ENCODE measurements at regions of chr2 and their contacts with region 1.

Region 1: GRCh38 chr2:30428827-30429461 is 18.1 kb upstream of the LCLAT1 start:
- DNase-seq: peak; percentile 32
- H3K4me3 Mint-ChIP-seq: no peak overlapping the region
- H3K27ac Mint-ChIP-seq: peak overlapping the region; percentile 63
- H3K4me1 Mint-ChIP-seq: peaks cover 27% of the 10 kb centered on the region
- H3K27me3 Mint-ChIP-seq: no peaks in the 10 kb centered on the region

Region 2: GRCh38 chr2:30410217-30410616 is 18.7 kb before region 1 on chr2:
- CTCF ChIA-PET with region 1: interaction called, 3 read pairs
- POLR2A ChIA-PET with region 1: interaction called, 3 read pairs
- intact Hi-C with region 1: loop called (anchors 2 kb)
- DNase-seq: peak; percentile 29
- H3K4me3 Mint-ChIP-seq: no peak overlapping the region
- H3K27ac Mint-ChIP-seq: peak overlapping the region; percentile 69
- H3K4me1 Mint-ChIP-seq: peaks cover 37% of the 10 kb centered on the region
- H3K27me3 Mint-ChIP-seq: no peaks in the 10 kb centered on the region

Measured in activated CD4-positive, alpha-beta memory T cell treated with anti-CD3 and anti-CD28 coated beads for 36 hours (primary cell).